ENCODE measurements at regions of chr1 and their contacts with region 1.

Region 1: DNA sequence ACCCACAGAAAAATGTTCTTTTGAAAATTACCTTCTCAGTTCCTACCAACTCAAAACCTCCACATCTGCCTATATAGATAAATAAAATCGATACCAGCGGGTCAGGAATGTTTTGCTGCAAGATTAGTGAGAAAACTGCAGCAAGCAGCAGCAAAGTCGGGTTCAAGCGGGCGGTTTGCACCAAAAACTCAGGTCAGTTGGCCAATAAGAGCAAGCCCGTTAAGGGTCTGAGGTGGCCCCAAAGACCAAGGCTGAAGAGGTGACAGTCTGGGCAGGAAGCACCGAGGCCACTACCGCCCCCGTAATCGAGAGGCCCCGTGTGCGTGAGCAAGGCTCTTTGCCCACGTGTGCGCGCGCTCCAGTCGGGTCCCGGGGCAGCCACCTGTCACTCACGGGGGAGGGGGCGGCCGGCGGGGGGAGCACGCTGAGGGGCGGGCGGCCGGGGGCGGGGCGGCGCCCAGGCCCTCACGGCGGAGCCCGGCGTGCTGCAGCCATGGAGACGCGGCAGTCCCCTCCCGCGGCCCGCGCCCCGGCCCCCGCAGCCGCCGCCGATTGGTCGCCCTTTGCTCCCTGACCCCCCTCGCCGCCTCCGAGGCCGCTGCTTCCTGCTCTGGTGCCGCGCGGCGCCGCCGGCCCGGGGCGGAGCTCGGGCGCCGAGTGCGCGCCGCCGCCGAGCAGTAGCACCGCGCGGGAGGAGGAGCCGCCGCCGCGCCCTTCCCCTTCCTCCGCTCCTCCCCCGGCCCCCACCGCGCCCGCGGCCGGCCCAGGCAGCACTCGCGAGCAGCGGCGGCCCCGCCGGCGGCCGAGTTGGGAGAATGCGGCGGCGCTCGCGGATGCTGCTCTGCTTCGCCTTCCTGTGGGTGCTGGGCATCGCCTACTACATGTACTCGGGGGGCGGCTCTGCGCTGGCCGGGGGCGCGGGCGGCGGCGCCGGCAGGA is at the start of gene GALNT2:
- DNase-seq: peak; percentile 88 to 93 (median 91)
- H3K4me3 ChIP-seq: peak within 1 kb of the TSS; percentile 50 to 74
- H3K4me3 Mint-ChIP-seq: peak within 1 kb of the TSS; percentile 89 to 95 (median 92)
- H3K27ac ChIP-seq: peak within 1 kb of the TSS; percentile 60
- H3K27ac Mint-ChIP-seq: peak within 1 kb of the TSS; percentile 88 to 97 (median 94)
- H3K4me1 ChIP-seq: peaks cover 21% of the 10 kb centered on the region
- H3K4me1 Mint-ChIP-seq: peaks cover 20 to 35% (median 26%) of the 10 kb centered on the region in 4 donors
- H3K27me3 ChIP-seq: no peaks in the 10 kb centered on the region
- H3K27me3 Mint-ChIP-seq: no peaks in the 10 kb centered on the region
- total RNA-seq, gene GALNT2: 18.9 to 20.9 TPM

Region 2: DNA sequence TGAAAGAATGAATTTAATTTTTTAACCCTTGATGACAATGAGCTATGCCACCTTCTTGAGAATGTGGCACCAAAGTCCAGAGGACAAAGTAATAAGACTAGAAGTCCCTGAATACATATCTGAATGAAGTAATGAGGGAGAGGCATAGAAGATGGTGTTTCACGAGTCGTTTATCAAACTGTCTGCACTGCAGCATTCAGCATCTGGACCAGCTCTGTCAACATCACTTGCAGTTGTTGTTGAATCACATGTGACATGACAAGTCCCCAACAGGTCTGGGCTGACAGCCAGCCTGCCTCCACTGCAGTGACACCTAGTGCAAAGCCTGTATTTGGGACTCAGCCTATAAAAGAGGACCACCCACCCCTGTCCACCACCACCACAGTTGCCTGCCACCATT is 17.0 kb before region 1 on chr1:
- CTCF ChIA-PET with region 1: no interaction called
- POLR2A ChIA-PET with region 1: no interaction called
- intact Hi-C with region 1: no loop called
- DNase-seq: no peak
- H3K4me3 ChIP-seq: no peak overlapping the region
- H3K4me3 Mint-ChIP-seq: no peak overlapping the region
- H3K27ac ChIP-seq: no peak overlapping the region
- H3K27ac Mint-ChIP-seq: no peak overlapping the region
- H3K4me1 ChIP-seq: no peaks in the 10 kb centered on the region
- H3K4me1 Mint-ChIP-seq: peaks cover 0 to 7% (median 3%) of the 10 kb centered on the region in 4 donors
- H3K27me3 ChIP-seq: no peaks in the 10 kb centered on the region
- H3K27me3 Mint-ChIP-seq: peaks cover 6 to 12% of the 10 kb centered on the region in 2 donors

Region 3: GRCh38 chr1:230104395-230105244 is 37.9 kb after region 1 on chr1:
- CTCF ChIA-PET with region 1: interaction called, 3 read pairs
- POLR2A ChIA-PET with region 1: interaction called, 4 read pairs
- intact Hi-C with region 1: loop called (anchors 2 kb)
- DNase-seq: peak in 4 of 5 donors; percentile 16 to 66 (median 30)
- H3K4me3 ChIP-seq: no peak overlapping the region
- H3K4me3 Mint-ChIP-seq: peak overlapping the region in 7 of 8 donors; percentile 40 to 82 (median 57)
- H3K27ac ChIP-seq: no peak overlapping the region
- H3K27ac Mint-ChIP-seq: peak overlapping the region in 5 of 7 donors; percentile 19 to 83 (median 29)
- H3K4me1 ChIP-seq: peaks cover 36% of the 10 kb centered on the region
- H3K4me1 Mint-ChIP-seq: peaks cover 38 to 77% (median 50%) of the 10 kb centered on the region in 4 donors
- H3K27me3 ChIP-seq: no peaks in the 10 kb centered on the region
- H3K27me3 Mint-ChIP-seq: no peaks in the 10 kb centered on the region

Region 4: DNA sequence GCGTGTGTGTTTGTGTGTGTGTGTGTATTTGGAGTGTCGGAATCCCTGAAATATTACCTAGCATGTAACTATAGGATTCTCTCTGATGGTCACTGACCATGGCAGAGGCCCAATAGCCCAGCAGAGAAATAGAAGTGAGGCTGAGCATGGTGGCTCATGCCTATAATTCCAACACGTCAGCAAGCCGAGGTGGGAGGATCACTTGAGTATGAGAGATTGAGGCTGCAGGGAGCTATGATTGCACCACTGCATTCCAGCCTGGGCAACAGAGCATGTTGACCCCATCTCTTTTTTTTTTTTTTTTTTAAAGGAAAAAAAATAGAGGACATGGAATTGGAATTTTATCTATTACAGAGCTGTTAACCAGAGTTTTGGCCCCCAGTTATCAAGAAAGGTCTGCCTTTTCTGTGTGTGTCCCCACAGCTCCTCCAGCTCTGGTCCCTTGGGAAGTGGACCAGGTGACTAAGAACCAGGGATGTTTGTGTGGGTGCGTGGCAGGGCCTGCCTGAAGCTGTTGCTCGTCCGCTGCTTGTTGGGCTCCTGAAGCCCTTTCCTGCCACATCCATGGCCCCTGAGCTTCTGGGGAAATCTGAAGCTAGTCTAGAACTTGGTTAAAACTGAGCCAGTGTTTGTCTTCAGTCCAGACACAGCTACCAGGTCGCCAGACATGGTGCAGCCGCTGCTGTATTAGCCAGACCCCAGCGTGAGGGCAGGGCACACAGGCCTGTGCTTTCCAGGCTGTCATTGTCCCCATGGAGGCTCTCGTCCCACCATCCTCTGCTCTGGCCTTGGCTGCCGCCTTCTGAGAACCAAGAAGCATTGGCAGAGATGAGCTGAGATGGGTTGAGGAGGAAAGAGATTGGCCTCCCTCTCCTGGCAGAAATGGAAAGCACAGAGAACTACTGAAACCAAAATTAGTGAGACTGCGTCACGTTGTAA is 706.0 kb after region 1 on chr1:
- CTCF ChIA-PET with region 1: no interaction called
- POLR2A ChIA-PET with region 1: no interaction called
- intact Hi-C with region 1: no loop called
- DNase-seq: no peak
- H3K4me3 ChIP-seq: no peak overlapping the region
- H3K4me3 Mint-ChIP-seq: no peak overlapping the region
- H3K27ac ChIP-seq: no peak overlapping the region
- H3K27ac Mint-ChIP-seq: no peak overlapping the region
- H3K4me1 ChIP-seq: no peaks in the 10 kb centered on the region
- H3K4me1 Mint-ChIP-seq: no peaks in the 10 kb centered on the region
- H3K27me3 ChIP-seq: no peaks in the 10 kb centered on the region
- H3K27me3 Mint-ChIP-seq: peaks cover 0 to 14% of the 10 kb centered on the region in 2 donors

Measured in CD4-positive, alpha-beta memory T cell (primary cell).